CD8-positive, alpha-beta T cell (primary cell): ENCODE measurements at regions of chr1 and their contacts with region 1.

Region 1: DNA sequence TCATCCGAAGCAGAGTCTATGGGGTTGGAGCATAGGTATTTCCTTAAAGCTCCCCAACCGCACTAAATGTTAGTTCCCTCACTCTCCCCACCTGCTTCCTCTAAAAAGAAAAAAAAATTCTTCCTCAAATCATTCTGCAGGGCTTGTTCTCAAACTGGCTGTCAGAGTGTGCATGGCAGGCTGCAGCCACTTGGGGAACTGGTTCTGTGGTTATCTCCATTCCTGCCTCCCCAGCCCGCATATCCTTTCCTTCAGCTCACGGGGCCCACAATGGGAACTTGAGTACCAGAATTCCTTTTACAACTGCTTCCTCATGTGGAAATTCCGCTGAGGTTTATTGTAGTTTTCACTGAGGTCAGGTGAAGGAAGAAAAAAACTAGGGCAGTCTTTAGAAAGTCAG is 159.2 kb downstream of the PIGK start:
- DNase-seq: no peak
- ATAC-seq: no peak
- H3K4me3 ChIP-seq: no peak overlapping the region
- H3K4me3 Mint-ChIP-seq: no peak overlapping the region
- H3K27ac ChIP-seq: no peak overlapping the region
- H3K27ac Mint-ChIP-seq: no peak overlapping the region
- H3K4me1 ChIP-seq: no peaks in the 10 kb centered on the region
- H3K4me1 Mint-ChIP-seq: no peaks in the 10 kb centered on the region
- H3K27me3 ChIP-seq: no peaks in the 10 kb centered on the region
- H3K27me3 Mint-ChIP-seq: no peaks in the 10 kb centered on the region
- CTCF ChIP-seq: no peak

Region 2: GRCh38 chr1:77076759-77077158 is 16.8 kb after region 1 on chr1:
- CTCF ChIA-PET with region 1: no interaction called
- POLR2A ChIA-PET with region 1: no interaction called
- intact Hi-C with region 1: loop called in 1 of 2 experiments (anchors 2 kb)
- DNase-seq: no peak
- ATAC-seq: no peak
- H3K4me3 ChIP-seq: no peak overlapping the region
- H3K4me3 Mint-ChIP-seq: no peak overlapping the region
- H3K27ac ChIP-seq: no peak overlapping the region
- H3K27ac Mint-ChIP-seq: no peak overlapping the region
- H3K4me1 ChIP-seq: no peaks in the 10 kb centered on the region
- H3K4me1 Mint-ChIP-seq: no peaks in the 10 kb centered on the region
- H3K27me3 ChIP-seq: no peaks in the 10 kb centered on the region
- H3K27me3 Mint-ChIP-seq: peaks cover 11% of the 10 kb centered on the region
- CTCF ChIP-seq: no peak